Posterior vena cava (tissue), 2 donors: ENCODE measurements at regions of chr5 and their contacts with region 1.

Region 1: GRCh38 chr5:39599721-39600431 is 175.1 kb upstream of the DAB2 start:
- DNase-seq: no peak

Region 2: GRCh38 chr5:39968381-39968780 is 368.5 kb after region 1 on chr5:
- intact Hi-C with region 1: loop called in 1 of 2 experiments (anchors 5 kb)
- DNase-seq: no peak

Region 3: GRCh38 chr5:40486437-40487275 is 886.8 kb after region 1 on chr5:
- intact Hi-C with region 1: no loop called
- DNase-seq: no peak

Region 4: DNA sequence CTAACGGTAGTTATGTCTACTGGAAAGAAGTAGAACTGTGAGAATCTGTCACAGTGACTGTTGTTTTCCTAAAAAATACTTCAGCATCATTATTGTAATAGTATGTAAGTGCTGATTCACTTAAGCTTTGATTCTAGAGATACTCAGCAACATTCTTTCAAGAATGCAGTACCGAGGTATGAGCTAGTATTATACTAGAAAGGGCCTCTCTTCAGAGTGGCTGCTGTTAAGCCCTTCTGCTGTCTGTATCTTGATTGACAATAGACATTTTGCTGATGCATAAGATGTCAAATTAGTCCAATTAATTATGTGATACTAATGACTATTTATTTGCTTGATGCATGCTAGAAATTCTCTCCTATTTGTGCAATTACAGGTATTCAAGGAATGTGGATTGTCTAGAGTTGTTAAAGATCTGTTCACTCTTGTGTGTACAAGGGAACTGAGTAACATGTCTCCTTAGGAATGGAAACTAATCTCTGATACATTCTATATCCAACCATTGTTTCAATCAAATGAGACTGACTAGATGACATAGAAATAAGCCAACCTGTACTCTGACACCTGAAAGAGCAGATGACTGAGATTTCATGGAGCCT is 987.5 kb after region 1 on chr5:
- intact Hi-C with region 1: loop called in 1 of 2 experiments (anchors 5 kb)
- DNase-seq: no peak

Region 5: GRCh38 chr5:41510176-41510831 is 1910.4 kb after region 1 on chr5 and contains the start of gene PLCXD3:
- intact Hi-C with region 1: no loop called
- DNase-seq: peak; percentile 75
- total RNA-seq, gene PLCXD3: 22.0 to 24.4 TPM